Esophagus squamous epithelium (tissue), 5 donors: ENCODE measurements at regions of chr17 and their contacts with region 1.

Region 1: GRCh38 chr17:27353461-27354050 is 59.6 kb downstream of the WSB1 start:
- DNase-seq: peak; percentile 50
- H3K4me3 ChIP-seq: peak overlapping the region; percentile 41 to 72 (median 63)
- H3K27ac ChIP-seq: peak overlapping the region; percentile 86 to 97 (median 92)
- H3K4me1 ChIP-seq: peaks cover 14 to 48% (median 26%) of the 10 kb centered on the region in 3 donors
- H3K27me3 ChIP-seq: no peaks in the 10 kb centered on the region
- CTCF ChIP-seq: peak; percentile 78 to 100 (median 100)
- POLR2A ChIP-seq: peak in 3 of 4 donors; percentile 88 to 93 (median 93)

Region 2: GRCh38 chr17:27455914-27456680 is 102.5 kb after region 1 on chr17 and contains the start of gene KSR1:
- intact Hi-C with region 1: loop called (anchors 10 kb)
- DNase-seq: peak; percentile 40
- H3K4me3 ChIP-seq: peak within 1 kb of the TSS; percentile 68 to 91 (median 86)
- H3K27ac ChIP-seq: peak within 1 kb of the TSS; percentile 72 to 89 (median 84)
- H3K4me1 ChIP-seq: peaks cover 18 to 51% (median 24%) of the 10 kb centered on the region in 3 donors
- H3K27me3 ChIP-seq: no peaks in the 10 kb centered on the region
- CTCF ChIP-seq: peak in 3 of 6 experiments; percentile 18 to 35 (median 27)
- POLR2A ChIP-seq: peak in 2 of 4 donors; percentile 78 to 91
- total RNA-seq, gene KSR1: 22.3 to 32.4 (median 31.0) TPM

Region 3: DNA sequence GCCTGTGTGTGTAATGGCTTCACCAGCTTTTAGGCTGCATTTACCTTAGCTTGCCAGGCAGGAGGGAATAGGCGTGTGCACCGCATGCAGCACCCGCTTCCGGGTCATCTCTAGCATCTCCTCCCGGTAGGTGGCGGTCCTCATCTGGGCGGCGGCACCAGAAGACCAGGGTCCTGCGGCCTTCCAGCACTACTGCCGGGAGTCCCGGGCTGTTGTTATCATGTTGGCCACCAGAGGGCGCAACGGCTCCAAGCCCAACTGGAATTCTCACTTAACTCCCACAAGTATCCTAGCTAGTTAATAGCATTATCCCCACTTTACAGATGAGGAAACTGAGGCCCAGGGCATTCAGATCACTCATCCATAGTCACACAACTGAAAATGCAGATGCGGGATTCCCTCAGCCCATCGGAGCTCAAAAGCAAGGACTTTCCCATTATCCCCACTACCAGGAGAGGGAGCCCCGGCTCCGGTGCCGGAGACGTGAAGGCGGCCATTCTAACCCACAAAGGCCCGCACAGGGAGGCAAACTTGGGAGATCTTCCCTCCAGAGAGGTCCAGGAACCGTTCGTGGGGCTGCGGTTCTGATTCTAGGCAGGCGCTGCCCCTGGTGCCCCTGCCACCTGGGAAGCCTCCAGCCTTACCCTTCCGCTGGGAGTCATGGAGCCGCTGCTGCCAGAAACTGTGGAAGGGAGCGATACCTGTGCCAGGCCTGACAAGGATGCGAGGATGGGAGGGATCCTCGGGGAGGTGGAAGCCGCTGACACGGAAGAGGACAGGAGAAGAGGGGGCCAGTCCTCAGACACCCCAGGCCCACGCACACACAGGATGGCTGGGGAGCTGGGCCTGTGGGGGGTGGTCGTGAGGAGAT is 301.3 kb after region 1 on chr17:
- intact Hi-C with region 1: loop called (anchors 10 kb)
- DNase-seq: no peak
- H3K4me3 ChIP-seq: no peak overlapping the region
- H3K27ac ChIP-seq: no peak overlapping the region
- H3K4me1 ChIP-seq: no peaks in the 10 kb centered on the region
- H3K27me3 ChIP-seq: peaks cover 0 to 11% (median 0%) of the 10 kb centered on the region in 4 donors
- CTCF ChIP-seq: peak; percentile 84 to 97 (median 90)
- POLR2A ChIP-seq: no peak